WTC11 (cell line): ENCODE measurements at regions of chr1 and their contacts with region 1.

Region 1: GRCh38 chr1:40709100-40709801 is 17.7 kb downstream of the NFYC start:
- DNase-seq: peak; percentile 71
- ATAC-seq: peak; percentile 95
- H3K4me3 Mint-ChIP-seq: peak overlapping the region; percentile 94
- H3K27ac Mint-ChIP-seq: peak overlapping the region; percentile 99
- H3K4me1 Mint-ChIP-seq: peaks cover 53% of the 10 kb centered on the region
- H3K27me3 Mint-ChIP-seq: no peaks in the 10 kb centered on the region
- CTCF ChIP-seq: no peak

Region 2: GRCh38 chr1:40612345-40612831 is 96.9 kb before region 1 on chr1:
- CTCF ChIA-PET with region 1: no interaction called
- POLR2A ChIA-PET with region 1: no interaction called
- DNase-seq: peak; percentile 77
- ATAC-seq: peak; percentile 98
- H3K4me3 Mint-ChIP-seq: no peak overlapping the region; the same call in 1 of the 2 replicates
- H3K27ac Mint-ChIP-seq: no peak overlapping the region
- H3K4me1 Mint-ChIP-seq: 0 out of 2 replicates have a peak, but pooled peaks cover 3% of the 10 kb centered on the region
- H3K27me3 Mint-ChIP-seq: no peaks in the 10 kb centered on the region
- CTCF ChIP-seq: peak; percentile 61

Region 3: DNA sequence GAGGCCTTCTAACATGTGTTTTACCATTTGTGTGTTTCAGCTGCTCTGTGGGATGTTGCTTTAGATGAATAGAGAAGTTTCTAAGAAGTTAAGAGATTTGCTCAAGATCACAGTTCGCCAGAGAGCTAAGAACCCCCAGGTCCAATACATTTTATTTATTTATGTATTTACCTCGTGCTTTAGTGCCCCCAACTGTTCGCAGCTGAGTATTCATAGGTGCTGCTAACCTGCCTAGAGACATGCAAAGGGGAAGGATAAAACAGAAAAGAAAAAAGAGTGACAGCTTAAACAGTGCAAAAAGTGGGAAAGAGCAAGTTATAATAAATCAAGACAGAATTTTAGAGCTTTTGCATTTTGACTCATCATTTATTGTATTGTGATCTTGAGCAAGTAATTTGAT is 13.4 kb after region 1 on chr1:
- CTCF ChIA-PET with region 1: interaction called, 11 read pairs
- POLR2A ChIA-PET with region 1: no interaction called
- DNase-seq: no peak
- ATAC-seq: no peak
- H3K4me3 Mint-ChIP-seq: no peak overlapping the region
- H3K27ac Mint-ChIP-seq: peak overlapping the region; percentile 25; the same call in 1 of the 2 replicates
- H3K4me1 Mint-ChIP-seq: peaks cover 18% of the 10 kb centered on the region
- H3K27me3 Mint-ChIP-seq: no peaks in the 10 kb centered on the region
- CTCF ChIP-seq: no peak

Region 4: GRCh38 chr1:40906781-40907400 is 197.6 kb after region 1 on chr1:
- CTCF ChIA-PET with region 1: no interaction called
- POLR2A ChIA-PET with region 1: no interaction called
- DNase-seq: no peak
- ATAC-seq: no peak
- H3K4me3 Mint-ChIP-seq: no peak overlapping the region
- H3K27ac Mint-ChIP-seq: no peak overlapping the region
- H3K4me1 Mint-ChIP-seq: no peaks in the 10 kb centered on the region
- H3K27me3 Mint-ChIP-seq: no peaks in the 10 kb centered on the region
- CTCF ChIP-seq: no peak